Calu3 (cell line): ENCODE measurements at regions of chr9 and their contacts with region 1.

Region 1: GRCh38 chr9:21395778-21396717 is 10.8 kb upstream of the IFNA2 start:
- DNase-seq: peak; percentile 46
- H3K4me3 Mint-ChIP-seq: peak overlapping the region; percentile 85
- H3K27ac Mint-ChIP-seq: no peak overlapping the region
- H3K4me1 Mint-ChIP-seq: peaks cover 13% of the 10 kb centered on the region
- H3K27me3 Mint-ChIP-seq: no peaks in the 10 kb centered on the region
- CTCF ChIP-seq: peak; percentile 86

Region 2: GRCh38 chr9:21252721-21253547 is 143.1 kb before region 1 on chr9:
- CTCF ChIA-PET with region 1: interaction called, 16 read pairs
- intact Hi-C with region 1: loop called (anchors 2 kb)
- DNase-seq: peak; percentile 21
- H3K4me3 Mint-ChIP-seq: no peak overlapping the region
- H3K27ac Mint-ChIP-seq: no peak overlapping the region
- H3K4me1 Mint-ChIP-seq: peaks cover 16% of the 10 kb centered on the region
- H3K27me3 Mint-ChIP-seq: peaks cover 11% of the 10 kb centered on the region
- CTCF ChIP-seq: peak; percentile 33

Region 3: GRCh38 chr9:21326526-21327139 is 69.4 kb before region 1 on chr9:
- CTCF ChIA-PET with region 1: interaction called, 13 read pairs
- intact Hi-C with region 1: loop called (anchors 2 kb)
- DNase-seq: no peak
- H3K4me3 Mint-ChIP-seq: no peak overlapping the region
- H3K27ac Mint-ChIP-seq: no peak overlapping the region
- H3K4me1 Mint-ChIP-seq: peaks cover 5% of the 10 kb centered on the region
- H3K27me3 Mint-ChIP-seq: no peaks in the 10 kb centered on the region
- CTCF ChIP-seq: no peak

Region 4: DNA sequence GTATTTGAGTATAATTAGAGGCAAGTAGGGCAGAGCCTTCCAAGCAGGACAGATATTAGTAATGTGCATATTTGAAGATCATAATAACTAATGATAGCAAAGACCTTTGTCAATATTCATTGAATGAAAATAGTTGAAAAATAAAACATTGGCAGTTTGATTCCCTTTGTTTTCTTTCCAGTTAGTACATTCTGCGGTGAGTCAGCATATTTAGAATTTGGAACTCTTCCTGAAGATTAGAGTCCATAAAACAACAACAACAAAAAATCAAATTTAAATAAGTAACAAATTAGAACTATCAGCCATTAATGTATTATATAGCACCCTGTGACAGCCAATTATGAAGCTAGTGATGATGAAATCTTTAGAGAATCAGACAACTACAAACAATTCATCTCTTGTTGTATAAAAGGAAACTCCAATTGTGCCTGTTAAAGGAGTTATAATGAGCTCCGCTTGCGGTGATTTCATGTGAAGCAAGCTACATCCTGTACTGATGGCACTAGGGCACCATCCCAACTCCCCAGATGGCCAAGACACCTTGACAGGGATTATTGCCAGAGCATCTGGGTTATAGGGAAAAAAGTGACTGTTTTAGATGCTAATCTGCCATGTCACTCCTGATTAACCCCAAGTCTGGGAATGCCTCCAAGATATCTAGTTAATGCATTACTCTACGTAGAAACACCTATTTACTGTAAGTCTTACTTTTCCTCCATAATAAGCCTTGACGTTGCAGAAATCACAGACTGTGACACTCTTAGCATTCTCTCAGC is 19.6 kb after region 1 on chr9:
- CTCF ChIA-PET with region 1: no interaction called
- intact Hi-C with region 1: no loop called
- DNase-seq: peak; percentile 18
- H3K4me3 Mint-ChIP-seq: no peak overlapping the region
- H3K27ac Mint-ChIP-seq: peak overlapping the region; percentile 69
- H3K4me1 Mint-ChIP-seq: peaks cover 37% of the 10 kb centered on the region
- H3K27me3 Mint-ChIP-seq: no peaks in the 10 kb centered on the region
- CTCF ChIP-seq: no peak

Region 5: DNA sequence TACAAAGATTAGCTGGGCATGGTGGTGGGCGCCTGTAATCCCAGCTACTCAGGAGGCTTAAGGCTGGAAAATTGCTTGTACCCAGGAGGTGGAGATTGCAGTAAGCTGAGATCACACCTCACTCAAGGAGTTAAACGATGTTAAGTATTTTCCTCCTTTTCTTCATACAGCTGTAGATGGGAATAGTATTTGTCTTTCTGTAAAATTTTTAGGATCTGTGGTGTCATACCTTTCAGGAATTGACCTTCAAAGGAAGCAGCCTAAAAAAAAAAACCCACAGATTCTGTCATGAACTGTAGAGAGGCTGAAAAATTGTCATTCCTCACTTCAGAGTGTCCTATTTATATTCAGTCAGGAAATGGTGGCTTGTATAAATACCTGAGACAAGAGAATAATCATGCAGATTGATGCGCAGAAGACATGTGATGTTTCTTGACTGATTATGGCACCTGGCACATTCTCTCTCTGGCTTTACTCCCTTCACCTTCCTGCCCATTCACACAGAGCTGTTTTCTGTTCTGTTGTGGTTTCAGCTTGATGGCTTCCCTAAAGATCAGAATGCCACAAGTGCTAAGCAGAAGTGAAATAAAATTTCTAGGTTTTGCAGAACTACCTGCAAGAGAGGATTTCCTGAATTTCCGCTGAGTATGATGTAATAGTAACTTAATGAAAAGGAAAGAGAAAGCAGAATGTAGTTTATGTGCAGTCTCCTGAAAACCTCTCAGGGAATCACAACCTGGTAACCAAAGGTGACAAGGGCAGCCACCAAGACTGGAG is 48.0 kb after region 1 on chr9:
- CTCF ChIA-PET with region 1: no interaction called
- intact Hi-C with region 1: loop called (anchors 10 kb)
- DNase-seq: no peak
- H3K4me3 Mint-ChIP-seq: no peak overlapping the region
- H3K27ac Mint-ChIP-seq: no peak overlapping the region
- H3K4me1 Mint-ChIP-seq: no peaks in the 10 kb centered on the region
- H3K27me3 Mint-ChIP-seq: no peaks in the 10 kb centered on the region
- CTCF ChIP-seq: no peak